GM12878 (cell line): ENCODE measurements at regions of chr2 and their contacts with region 1.

Region 1: DNA sequence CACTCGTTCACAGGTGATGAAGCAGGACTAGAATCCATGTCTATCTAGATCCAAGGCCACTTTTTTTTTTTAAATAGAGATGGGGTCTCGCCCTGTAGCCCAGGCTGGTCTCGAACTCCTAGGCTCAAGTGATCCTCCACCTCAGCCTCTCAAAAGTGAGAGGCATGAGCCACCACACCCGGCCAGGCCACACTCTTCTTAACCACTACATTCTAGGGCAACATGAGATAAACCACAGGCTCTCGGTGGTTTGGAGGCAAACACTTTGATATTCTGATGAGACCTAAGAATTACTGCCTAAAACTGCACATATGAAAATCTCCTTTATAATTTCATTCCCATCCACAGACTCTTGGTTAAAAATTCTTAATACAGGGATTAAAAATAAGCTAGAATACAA is 51.8 kb downstream of the USP34 start:
- DNase-seq: no peak
- ATAC-seq: peak; percentile 90
- H3K4me3 ChIP-seq: no peak overlapping the region
- H3K27ac ChIP-seq: no peak overlapping the region
- H3K4me1 ChIP-seq: peaks cover 26% of the 10 kb centered on the region
- H3K27me3 ChIP-seq: no peaks in the 10 kb centered on the region
- CTCF ChIP-seq: no peak
- EP300 ChIP-seq: no peak
- POLR2A ChIP-seq: no peak
- RAD21 ChIP-seq: no peak

Region 2: DNA sequence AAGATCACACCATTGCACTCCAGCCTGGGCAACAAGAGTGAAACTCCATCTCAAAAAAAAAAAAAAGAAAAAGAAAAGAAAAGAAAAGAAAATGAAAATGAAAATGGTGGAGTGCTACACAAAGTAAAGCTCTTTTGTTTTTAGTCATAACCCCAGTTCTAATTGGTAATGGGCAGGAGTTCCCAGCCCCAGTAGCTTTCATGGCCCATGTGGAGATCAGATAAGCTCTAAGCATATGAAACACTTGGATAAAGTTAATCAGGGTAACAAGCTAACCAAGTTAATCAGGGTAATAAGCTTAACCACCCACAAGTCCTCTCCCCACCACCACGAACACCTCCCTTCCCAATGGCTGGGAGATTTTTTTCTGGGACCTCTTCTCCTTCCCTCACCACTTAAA is 1106.5 kb before region 1 on chr2:
- CTCF ChIA-PET with region 1: no interaction called
- POLR2A ChIA-PET with region 1: no interaction called
- RAD21 ChIA-PET with region 1: no interaction called
- SMC1A ChIA-PET with region 1: no interaction called
- in situ Hi-C with region 1: no loop called
- intact Hi-C with region 1: no loop called
- DNase-seq: peak; percentile 58
- ATAC-seq: peak; percentile 84
- H3K4me3 ChIP-seq: no peak overlapping the region
- H3K27ac ChIP-seq: peak overlapping the region; percentile 70; the same call in 1 of the 2 replicates
- H3K4me1 ChIP-seq: peaks cover 67% of the 10 kb centered on the region
- H3K27me3 ChIP-seq: no peaks in the 10 kb centered on the region
- CTCF ChIP-seq: no peak
- EP300 ChIP-seq: no peak
- POLR2A ChIP-seq: no peak
- RAD21 ChIP-seq: no peak

Region 3: DNA sequence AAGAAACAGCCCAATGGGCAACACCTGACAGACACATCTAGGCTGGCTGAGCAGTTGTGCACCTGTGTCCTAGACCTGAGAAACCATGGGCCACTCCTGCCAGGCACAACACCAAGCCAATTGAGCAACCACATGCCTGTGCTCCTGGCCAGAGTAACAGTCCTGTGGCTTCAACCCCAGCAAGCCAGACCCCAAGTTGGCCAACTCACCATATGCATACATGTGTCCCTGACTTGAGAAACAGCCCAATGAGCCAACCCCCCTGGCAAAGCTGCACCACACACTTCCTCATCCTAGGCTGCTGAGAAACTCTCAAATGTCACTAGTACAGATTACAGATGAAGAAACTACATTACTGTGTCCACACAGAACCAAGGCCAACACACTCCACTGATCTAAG is 15.2 kb after region 1 on chr2:
- CTCF ChIA-PET with region 1: interaction called, 9 read pairs
- POLR2A ChIA-PET with region 1: interaction called, 4 read pairs
- RAD21 ChIA-PET with region 1: interaction called, 3 read pairs
- SMC1A ChIA-PET with region 1: interaction called, 16 read pairs
- in situ Hi-C with region 1: no loop called
- intact Hi-C with region 1: no loop called
- DNase-seq: no peak
- ATAC-seq: peak; percentile 80
- H3K4me3 ChIP-seq: no peak overlapping the region
- H3K27ac ChIP-seq: no peak overlapping the region; the same call in 1 of the 2 replicates
- H3K4me1 ChIP-seq: peaks cover 32% of the 10 kb centered on the region
- H3K27me3 ChIP-seq: no peaks in the 10 kb centered on the region
- CTCF ChIP-seq: no peak
- EP300 ChIP-seq: no peak
- POLR2A ChIP-seq: no peak
- RAD21 ChIP-seq: no peak